ENCODE measurements at regions of chr6 and their contacts with region 1.

Region 1: DNA sequence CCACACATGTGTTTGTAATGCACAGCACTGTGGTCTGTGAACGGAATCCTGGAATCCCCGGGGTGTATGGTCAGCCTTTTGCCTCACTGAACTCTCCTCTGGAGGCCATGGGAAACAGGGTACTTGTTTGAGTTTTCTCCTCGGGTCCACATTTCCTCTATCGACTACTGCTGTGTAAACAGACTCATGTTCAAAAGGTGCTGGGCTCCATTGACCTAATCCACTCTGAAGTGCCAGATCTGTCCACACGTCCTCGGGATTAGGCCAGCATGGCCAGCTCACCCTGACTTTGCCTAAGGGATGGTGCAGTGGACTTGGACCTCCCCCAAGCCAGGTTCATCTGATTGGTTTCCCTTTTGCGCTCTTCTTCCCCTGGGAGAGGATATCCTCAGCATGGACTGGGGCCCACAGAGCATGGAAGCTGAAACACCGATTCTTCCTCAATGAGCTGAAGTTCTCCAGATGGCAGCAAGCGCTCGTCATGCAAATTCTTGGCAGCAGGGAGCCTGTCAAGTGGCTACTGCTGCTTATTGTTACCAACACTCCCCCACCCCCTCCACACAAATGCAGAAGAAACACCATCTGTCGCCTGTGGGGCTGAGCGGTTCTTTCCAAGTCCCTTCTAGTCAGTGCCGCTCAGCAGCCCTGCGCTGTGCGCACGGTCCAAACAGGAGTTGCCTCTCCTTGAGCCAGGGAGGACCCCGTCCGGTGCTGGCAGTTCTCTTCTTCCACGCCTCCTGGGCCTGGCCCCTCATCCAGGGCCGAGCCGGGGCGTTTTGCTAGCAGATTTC is 292.6 kb upstream of the MARCKS start:
- DNase-seq: peak; percentile 80 to 93
- ATAC-seq: peak; percentile 98 to 100 (median 98)
- H3K4me3 ChIP-seq: peak overlapping the region in 9 of 10 donors; percentile 13 to 48 (median 36)
- H3K27ac ChIP-seq: peak overlapping the region; percentile 16 to 86 (median 77)
- H3K4me1 ChIP-seq: peaks cover 4 to 18% (median 14%) of the 10 kb centered on the region in 9 donors
- H3K27me3 ChIP-seq: no peaks in the 10 kb centered on the region
- CTCF ChIP-seq: peak in 7 of 9 donors; percentile 12 to 46 (median 29)

Region 2: DNA sequence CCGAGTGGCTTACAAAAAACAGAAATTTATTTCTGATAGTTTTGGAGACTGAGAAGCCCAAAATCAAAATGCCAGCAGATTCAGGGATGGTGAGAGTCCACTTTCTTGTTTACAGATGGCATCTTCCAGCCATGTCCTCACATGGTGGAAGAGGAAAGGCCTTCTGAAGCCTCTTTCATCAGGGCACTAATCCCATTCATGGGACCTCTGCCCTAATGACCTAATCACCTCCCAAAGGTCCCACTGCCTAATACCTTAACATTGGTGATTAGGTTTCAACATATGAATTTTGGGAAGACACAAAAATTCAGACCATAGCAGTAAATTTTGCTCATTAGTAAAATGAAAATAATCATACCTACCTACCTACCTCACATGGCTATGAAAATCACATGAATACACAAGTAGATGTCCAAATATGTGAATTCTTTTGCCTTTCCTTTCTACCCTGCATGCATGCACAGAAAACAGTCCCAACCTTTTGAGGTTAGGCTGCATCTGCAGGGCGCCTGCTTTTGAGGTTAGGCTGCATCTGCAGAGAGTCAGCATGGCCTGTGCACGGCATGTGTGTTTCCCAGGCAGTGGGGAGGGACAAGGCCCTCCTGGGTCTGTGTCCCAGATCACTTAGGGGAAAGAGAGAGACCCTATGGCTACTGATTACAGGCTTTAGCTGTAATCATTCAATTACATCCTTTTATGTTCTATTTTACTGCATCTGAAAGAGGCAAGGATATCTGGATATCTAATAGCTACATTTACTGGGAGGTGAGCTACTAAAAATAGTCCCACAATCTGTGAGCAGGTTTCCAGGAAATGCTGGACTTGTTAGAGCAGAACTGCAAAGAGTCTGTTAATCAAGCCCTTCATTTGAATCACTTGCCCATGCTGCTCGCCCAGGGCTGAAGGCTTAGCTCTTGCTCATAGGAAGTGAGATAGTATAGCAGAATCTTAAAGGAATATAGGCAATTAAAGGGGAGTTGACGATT is 205.1 kb before region 1 on chr6:
- intact Hi-C with region 1: no loop called
- DNase-seq: peak in 1 of 2 donors; percentile 17
- ATAC-seq: peak in 6 of 8 donors; percentile 40 to 73 (median 58)
- H3K4me3 ChIP-seq: no peak overlapping the region
- H3K27ac ChIP-seq: peak overlapping the region in 3 of 10 donors; percentile 2 to 25 (median 10)
- H3K4me1 ChIP-seq: peaks cover 0 to 34% (median 12%) of the 10 kb centered on the region in 9 donors
- H3K27me3 ChIP-seq: no peaks in the 10 kb centered on the region
- CTCF ChIP-seq: no peak

Region 3: GRCh38 chr6:113476937-113477839 is 87.4 kb before region 1 on chr6:
- intact Hi-C with region 1: no loop called
- DNase-seq: no peak
- ATAC-seq: peak in 1 of 8 donors; percentile 42
- H3K4me3 ChIP-seq: no peak overlapping the region
- H3K27ac ChIP-seq: no peak overlapping the region
- H3K4me1 ChIP-seq: peaks cover 0 to 12% (median 0%) of the 10 kb centered on the region in 9 donors
- H3K27me3 ChIP-seq: no peaks in the 10 kb centered on the region
- CTCF ChIP-seq: no peak

Region 4: GRCh38 chr6:113632220-113632864 is 67.8 kb after region 1 on chr6:
- intact Hi-C with region 1: loop called in 1 of 10 experiments (anchors 2 kb)
- DNase-seq: peak in 1 of 2 donors; percentile 40
- ATAC-seq: peak in 7 of 8 donors; percentile 44 to 79 (median 64)
- H3K4me3 ChIP-seq: peak overlapping the region in 5 of 10 donors; percentile 9 to 30 (median 17)
- H3K27ac ChIP-seq: peak overlapping the region in 9 of 10 donors; percentile 7 to 85 (median 54)
- H3K4me1 ChIP-seq: peaks cover 0 to 74% (median 40%) of the 10 kb centered on the region in 9 donors
- H3K27me3 ChIP-seq: no peaks in the 10 kb centered on the region
- CTCF ChIP-seq: no peak